ENCODE measurements at regions of chr20 and their contacts with region 1.

Region 1: DNA sequence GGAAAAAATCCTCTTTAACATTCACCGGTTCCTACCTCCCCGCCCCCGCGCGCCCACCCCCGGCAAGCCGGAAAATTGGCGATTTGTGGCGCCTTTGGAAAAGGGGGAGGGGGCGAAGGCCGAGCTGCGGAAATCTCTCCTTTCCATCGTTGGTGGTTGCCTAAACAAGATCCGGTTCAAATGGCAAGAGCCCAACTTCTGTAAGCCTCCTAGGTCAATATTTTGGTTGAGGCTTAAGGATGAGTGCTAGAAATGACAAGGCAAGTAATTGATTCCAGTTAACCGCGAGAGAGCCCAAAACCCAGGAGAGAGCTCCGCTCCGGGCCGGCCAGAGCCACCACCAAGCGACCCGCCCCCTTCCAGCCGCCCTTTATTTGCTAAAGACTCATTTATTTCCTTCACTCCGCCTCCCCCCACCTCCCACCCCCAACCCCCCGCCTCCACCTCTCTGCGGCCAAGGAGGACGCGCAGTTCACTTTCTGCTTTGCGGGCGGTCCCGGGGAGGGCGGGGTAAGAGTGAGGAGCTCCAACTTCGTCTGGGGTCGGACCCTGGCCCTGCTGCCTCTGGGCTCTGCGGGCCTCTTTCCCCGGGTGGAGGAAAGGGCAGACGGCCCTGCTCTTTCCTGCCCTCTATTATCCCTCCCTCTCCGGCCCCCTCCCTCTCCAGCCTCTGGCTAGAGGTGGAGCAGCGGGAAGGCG is 838 bp upstream of the NKX2-2 start:
- DNase-seq: no peak

Region 2: DNA sequence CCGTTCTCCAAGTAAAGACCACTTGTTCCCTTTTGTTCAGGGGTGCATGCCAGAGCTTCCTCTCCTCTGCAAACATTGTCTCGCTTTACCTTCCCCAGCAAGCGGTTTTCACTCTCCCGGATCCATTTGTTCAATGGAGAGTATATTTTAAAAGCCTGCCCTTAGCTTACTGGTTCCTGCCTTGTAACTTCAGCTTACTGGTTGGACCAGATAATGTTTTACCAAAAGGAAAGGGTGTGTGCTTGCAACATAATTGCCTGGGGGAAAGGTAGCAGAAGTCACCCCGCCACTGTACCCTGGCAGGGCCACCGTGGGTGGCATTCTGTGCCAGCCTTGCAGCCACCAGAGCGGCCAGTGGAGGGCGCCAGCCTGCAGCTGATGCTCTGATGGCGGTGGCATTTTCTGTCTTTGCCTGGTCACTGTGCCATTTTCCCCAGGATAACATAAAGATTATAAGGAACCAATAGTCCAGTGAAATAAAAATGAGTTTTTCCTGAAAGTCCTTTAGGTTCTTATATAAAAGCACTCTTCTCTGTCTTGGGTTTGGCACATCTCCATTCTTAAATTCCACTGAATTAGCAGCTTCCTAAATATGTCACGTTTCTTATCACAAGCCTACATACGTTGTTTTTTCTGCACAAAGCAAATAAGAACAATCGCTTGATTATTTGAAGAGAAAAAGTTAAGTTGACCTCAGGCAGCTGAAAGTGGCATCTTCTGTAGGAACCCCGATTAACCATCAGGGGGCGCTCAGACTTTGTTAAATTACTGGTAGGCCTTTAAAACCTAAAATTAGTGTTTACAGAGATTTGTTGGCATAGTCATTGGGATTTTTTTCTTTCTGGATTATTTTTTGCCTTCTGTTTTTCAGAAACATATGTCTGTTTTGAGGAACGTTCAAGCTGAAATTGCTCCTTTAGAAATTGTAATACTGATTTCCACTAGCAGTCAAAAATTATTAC is 278.9 kb before region 1 on chr20:
- intact Hi-C with region 1: loop called (anchors 5 to 10 kb)
- DNase-seq: no peak